ENCODE measurements at regions of chr1 and their contacts with region 1.

Region 1: DNA sequence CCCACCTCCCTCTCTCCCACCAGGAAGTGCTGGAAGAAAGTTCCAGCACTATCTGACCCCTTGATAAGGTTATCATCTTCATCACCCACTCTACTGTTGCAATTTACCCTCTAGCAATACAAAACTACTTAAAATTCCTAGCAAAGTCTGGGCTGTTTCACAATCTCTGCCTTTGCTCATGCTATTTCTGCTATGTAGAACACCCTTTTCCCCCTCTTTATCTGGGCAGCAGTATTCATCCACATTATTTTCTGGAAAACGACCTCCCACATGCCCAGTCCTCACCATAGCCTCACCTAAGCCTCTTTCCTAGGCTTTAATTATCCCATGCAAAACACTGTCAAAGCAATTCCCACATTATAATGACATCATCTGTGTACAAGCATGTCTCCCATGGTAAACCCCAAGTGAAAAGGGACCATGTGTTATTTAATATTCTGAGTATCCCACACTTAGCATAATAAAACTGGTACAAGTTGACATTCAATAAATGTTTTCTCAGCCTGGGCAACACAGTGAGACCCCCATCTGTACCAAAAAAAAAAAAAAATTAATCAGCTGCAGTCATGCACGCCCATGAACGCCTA is 11.9 kb downstream of the F11R start:
- DNase-seq: peak in 1 of 7 donors; percentile 3
- H3K4me3 ChIP-seq: no peak overlapping the region
- H3K27ac ChIP-seq: no peak overlapping the region
- H3K4me1 ChIP-seq: peaks cover 9 to 13% of the 10 kb centered on the region in 2 donors
- H3K27me3 ChIP-seq: no peaks in the 10 kb centered on the region
- CTCF ChIP-seq: no peak
- POLR2A ChIP-seq: no peak

Region 2: DNA sequence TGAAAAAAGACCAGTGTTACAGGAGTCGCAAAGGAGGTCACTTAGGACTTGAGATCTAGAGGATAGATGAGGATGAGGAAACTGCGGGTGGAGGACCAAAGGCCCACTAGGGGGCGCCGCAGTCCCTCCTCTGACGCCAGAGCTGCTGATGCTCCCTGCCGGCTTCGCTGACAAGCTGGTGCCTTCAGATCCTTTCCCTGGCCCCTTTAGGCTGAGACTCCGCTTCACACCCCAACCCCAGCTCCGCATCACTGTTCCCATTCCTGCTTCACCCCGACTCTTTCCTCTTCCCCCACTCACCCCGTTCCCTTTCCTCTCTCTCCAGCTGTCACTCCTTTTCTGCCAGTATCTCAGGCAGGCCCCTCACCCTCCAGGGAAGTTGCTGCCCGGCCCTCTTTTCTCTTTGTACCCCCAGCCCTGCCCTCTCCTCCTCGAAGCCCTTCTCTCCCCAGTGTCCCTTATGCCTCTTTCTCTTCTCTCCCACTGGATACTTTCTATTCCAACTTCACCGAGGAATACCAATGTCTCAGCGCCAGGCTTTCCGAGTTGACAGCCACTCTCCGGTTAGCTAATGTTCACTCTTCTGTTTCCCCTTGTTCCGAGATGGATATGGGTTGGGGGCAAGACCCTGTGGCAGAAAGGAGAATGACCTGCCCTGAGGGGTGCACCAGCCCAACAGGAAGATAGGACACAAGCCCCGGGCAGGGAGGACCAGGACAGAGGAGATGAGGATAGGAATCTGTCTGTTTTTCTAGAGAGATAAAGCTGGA is 923.1 kb before region 1 on chr1:
- intact Hi-C with region 1: no loop called
- DNase-seq: peak; percentile 65 to 91 (median 84)
- H3K4me3 ChIP-seq: no peak overlapping the region
- H3K27ac ChIP-seq: no peak overlapping the region
- H3K4me1 ChIP-seq: peaks cover 0 to 4% of the 10 kb centered on the region in 2 donors
- H3K27me3 ChIP-seq: peaks cover 21% of the 10 kb centered on the region
- CTCF ChIP-seq: peak; percentile 60 to 87 (median 71)
- POLR2A ChIP-seq: no peak

Region 3: GRCh38 chr1:160907976-160908375 is 101.0 kb before region 1 on chr1:
- intact Hi-C with region 1: no loop called
- DNase-seq: no peak
- H3K4me3 ChIP-seq: no peak overlapping the region
- H3K27ac ChIP-seq: no peak overlapping the region
- H3K4me1 ChIP-seq: peaks cover 0 to 12% of the 10 kb centered on the region in 2 donors
- H3K27me3 ChIP-seq: no peaks in the 10 kb centered on the region
- CTCF ChIP-seq: no peak
- POLR2A ChIP-seq: no peak

Region 4: GRCh38 chr1:160951443-160952128 is 57.4 kb before region 1 on chr1:
- intact Hi-C with region 1: no loop called
- DNase-seq: peak; percentile 41 to 82 (median 68)
- H3K4me3 ChIP-seq: no peak overlapping the region
- H3K27ac ChIP-seq: no peak overlapping the region
- H3K4me1 ChIP-seq: no peaks in the 10 kb centered on the region
- H3K27me3 ChIP-seq: no peaks in the 10 kb centered on the region
- CTCF ChIP-seq: peak; percentile 45 to 76 (median 68)
- POLR2A ChIP-seq: no peak

Region 5: GRCh38 chr1:161092621-161093028 is 83.6 kb after region 1 on chr1:
- intact Hi-C with region 1: loop called in 1 of 2 experiments (anchors 5 kb)
- DNase-seq: no peak
- H3K4me3 ChIP-seq: no peak overlapping the region
- H3K27ac ChIP-seq: no peak overlapping the region
- H3K4me1 ChIP-seq: no peaks in the 10 kb centered on the region
- H3K27me3 ChIP-seq: no peaks in the 10 kb centered on the region
- CTCF ChIP-seq: no peak
- POLR2A ChIP-seq: no peak

Region 6: GRCh38 chr1:161915051-161915503 is 906.1 kb after region 1 on chr1:
- intact Hi-C with region 1: no loop called
- DNase-seq: no peak
- H3K4me3 ChIP-seq: no peak overlapping the region
- H3K27ac ChIP-seq: no peak overlapping the region
- H3K4me1 ChIP-seq: peaks cover 0 to 20% of the 10 kb centered on the region in 2 donors
- H3K27me3 ChIP-seq: no peaks in the 10 kb centered on the region
- CTCF ChIP-seq: no peak
- POLR2A ChIP-seq: no peak